ENCODE measurements at regions of chr2 and their contacts with region 1.

Region 1: DNA sequence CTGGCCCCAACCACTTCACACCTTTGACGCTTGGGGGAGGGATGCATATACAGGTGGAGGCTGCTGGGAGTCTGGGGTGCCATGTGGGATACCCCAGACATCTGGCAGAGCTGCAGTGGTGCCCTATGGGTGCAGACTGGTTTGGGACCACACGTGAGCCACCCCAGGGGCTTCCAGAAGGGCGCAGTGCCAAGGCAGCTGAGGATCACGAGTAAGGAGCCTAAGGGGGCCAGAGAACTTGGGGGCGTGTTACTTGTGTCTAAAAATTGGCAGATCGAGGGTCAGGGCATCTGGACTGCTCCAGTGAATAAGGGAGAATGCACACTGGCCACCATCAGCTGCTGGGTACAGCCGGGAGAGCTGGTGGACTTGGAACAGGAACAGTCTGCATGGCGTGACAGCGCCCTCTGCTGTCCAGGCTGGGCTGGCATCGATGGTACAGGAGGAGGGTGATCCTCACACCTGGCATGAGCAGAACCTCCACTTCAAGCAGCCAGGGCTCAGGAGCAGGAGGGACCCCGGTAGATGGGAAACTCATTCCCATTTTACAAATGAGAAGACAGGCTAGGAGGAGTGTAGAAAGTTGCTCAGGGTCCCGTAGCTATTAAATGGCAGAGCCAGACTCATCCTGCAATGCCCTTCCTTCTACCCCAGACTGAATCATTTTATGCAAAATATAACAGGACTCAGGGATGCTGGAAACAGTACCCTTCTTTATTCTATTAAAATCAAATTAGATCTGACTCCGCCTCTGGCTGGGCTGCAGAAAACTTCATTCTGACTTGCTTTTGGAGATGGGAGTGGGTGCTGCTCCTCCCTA is 60.4 kb downstream of the ATOH8 start:
- DNase-seq: peak; percentile 95
- H3K4me3 Mint-ChIP-seq: no peak overlapping the region
- H3K27ac Mint-ChIP-seq: no peak overlapping the region
- H3K4me1 Mint-ChIP-seq: peaks cover 3% of the 10 kb centered on the region
- H3K27me3 Mint-ChIP-seq: peaks cover 17% of the 10 kb centered on the region

Region 2: GRCh38 chr2:85611705-85612587 is 202.2 kb before region 1 on chr2 and contains the start of gene C2orf68:
- intact Hi-C with region 1: no loop called
- DNase-seq: peak; percentile 97
- H3K4me3 Mint-ChIP-seq: peak within 1 kb of the TSS; percentile 92
- H3K27ac Mint-ChIP-seq: peak within 1 kb of the TSS; percentile 91
- H3K4me1 Mint-ChIP-seq: peaks cover 13% of the 10 kb centered on the region
- H3K27me3 Mint-ChIP-seq: no peaks in the 10 kb centered on the region
- total RNA-seq, gene C2orf68: 36.6 and 36.9 TPM in 2 replicates

Region 3: GRCh38 chr2:85642725-85643124 is 171.5 kb before region 1 on chr2:
- intact Hi-C with region 1: loop called (anchors 1 kb)
- DNase-seq: no peak
- H3K4me3 Mint-ChIP-seq: no peak overlapping the region
- H3K27ac Mint-ChIP-seq: peak overlapping the region; percentile 16
- H3K4me1 Mint-ChIP-seq: peaks cover 12% of the 10 kb centered on the region
- H3K27me3 Mint-ChIP-seq: no peaks in the 10 kb centered on the region

Region 4: GRCh38 chr2:85678794-85679672 is 135.2 kb before region 1 on chr2:
- intact Hi-C with region 1: loop called (anchors 5 kb)
- DNase-seq: peak; percentile 95
- H3K4me3 Mint-ChIP-seq: peak overlapping the region; percentile 18
- H3K27ac Mint-ChIP-seq: no peak overlapping the region
- H3K4me1 Mint-ChIP-seq: peaks cover 24% of the 10 kb centered on the region
- H3K27me3 Mint-ChIP-seq: no peaks in the 10 kb centered on the region

Region 5: GRCh38 chr2:85728883-85729824 is 85.0 kb before region 1 on chr2:
- intact Hi-C with region 1: loop called (anchors 1 kb)
- DNase-seq: peak; percentile 93
- H3K4me3 Mint-ChIP-seq: no peak overlapping the region
- H3K27ac Mint-ChIP-seq: no peak overlapping the region
- H3K4me1 Mint-ChIP-seq: peaks cover 3% of the 10 kb centered on the region
- H3K27me3 Mint-ChIP-seq: peaks cover 32% of the 10 kb centered on the region

Region 6: GRCh38 chr2:85750587-85751575 is 63.3 kb before region 1 on chr2:
- intact Hi-C with region 1: loop called (anchors 1 kb)
- DNase-seq: peak; percentile 89
- H3K4me3 Mint-ChIP-seq: no peak overlapping the region
- H3K27ac Mint-ChIP-seq: no peak overlapping the region
- H3K4me1 Mint-ChIP-seq: peaks cover 15% of the 10 kb centered on the region
- H3K27me3 Mint-ChIP-seq: peaks cover 81% of the 10 kb centered on the region

Region 7: DNA sequence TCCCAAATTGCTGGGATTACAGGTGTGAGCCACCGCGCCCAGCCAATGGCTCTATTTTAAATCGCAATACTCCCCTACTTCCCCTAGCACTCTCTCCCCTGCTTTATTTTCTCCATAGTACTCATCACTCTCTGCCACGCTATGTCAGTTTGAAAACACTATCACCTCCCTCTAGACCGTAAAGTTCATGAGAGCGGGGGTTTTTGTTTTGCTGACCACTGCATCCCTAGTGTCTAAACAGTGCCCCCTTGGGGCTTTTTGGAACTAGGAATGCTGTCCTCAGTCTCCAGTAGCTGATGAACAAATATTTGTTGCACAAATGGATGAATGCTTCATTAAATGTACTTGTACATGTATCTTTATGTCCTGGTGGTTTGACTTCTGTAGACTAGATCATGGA is 16.3 kb before region 1 on chr2:
- intact Hi-C with region 1: no loop called
- DNase-seq: no peak
- H3K4me3 Mint-ChIP-seq: no peak overlapping the region
- H3K27ac Mint-ChIP-seq: no peak overlapping the region
- H3K4me1 Mint-ChIP-seq: peaks cover 3% of the 10 kb centered on the region
- H3K27me3 Mint-ChIP-seq: peaks cover 13% of the 10 kb centered on the region

Region 8: GRCh38 chr2:85935746-85936208 is 121.6 kb after region 1 on chr2:
- intact Hi-C with region 1: no loop called
- DNase-seq: no peak
- H3K4me3 Mint-ChIP-seq: no peak overlapping the region
- H3K27ac Mint-ChIP-seq: no peak overlapping the region
- H3K4me1 Mint-ChIP-seq: peaks cover 14% of the 10 kb centered on the region
- H3K27me3 Mint-ChIP-seq: peaks cover 3% of the 10 kb centered on the region

Measured in activated CD4-positive, alpha-beta T cell treated with anti-CD3 and anti-CD28 coated beads, Interleukin-2, amount 10 ng/mL, durations not matched to agents 24 days and 14 days (primary cell).